Mammary epithelial cell (primary cell): ENCODE measurements at regions of chr5 and their contacts with region 1.

Region 1: DNA sequence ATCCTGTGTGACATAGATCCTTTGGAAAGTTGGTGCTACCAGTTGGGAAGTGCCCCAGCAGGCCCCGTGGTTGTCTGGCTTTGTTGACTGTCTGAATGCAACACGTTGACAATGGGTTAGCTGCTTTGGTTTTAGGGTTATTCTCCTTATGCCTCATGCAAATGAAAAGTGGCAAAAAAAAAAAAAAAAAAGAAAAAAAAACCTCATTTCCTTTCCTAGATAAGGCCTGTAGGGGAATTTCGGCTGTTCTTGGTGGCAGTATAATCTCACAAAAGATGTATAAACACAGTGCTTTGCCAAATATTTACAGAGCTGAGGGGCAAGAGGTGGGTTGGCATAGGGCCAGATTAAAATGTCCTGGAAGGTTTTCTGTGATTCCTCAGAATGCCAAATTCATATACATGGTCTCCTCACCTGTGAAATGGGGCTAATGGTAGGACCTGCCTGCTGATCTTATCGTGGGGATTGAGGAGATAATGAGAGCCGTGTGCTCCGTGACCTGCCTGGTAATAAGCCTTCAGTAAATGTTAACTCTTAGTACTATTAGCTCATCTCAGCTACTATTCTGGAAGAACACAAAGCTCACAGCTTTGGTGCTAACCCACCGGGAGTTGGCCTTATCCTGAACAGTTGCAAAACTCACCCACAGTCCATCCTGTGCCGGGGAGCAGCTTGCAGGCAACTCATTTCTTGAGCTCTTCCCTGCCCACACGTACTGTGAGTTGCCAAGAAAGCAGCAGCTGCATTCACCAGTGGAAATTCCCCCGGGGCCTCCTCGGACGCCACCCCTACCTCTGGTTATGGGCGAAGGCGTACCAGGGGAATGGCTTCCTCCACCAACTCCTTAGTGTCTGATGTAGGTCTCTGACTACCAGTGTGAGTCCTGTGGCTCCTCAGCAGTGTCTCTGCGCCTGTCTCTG is 220.3 kb downstream of the NR3C1 start:
- DNase-seq: no peak
- H3K4me3 ChIP-seq: no peak overlapping the region
- H3K27ac ChIP-seq: peak overlapping the region; percentile 4
- H3K4me1 ChIP-seq: peaks cover 35% of the 10 kb centered on the region
- H3K27me3 ChIP-seq: no peaks in the 10 kb centered on the region
- CTCF ChIP-seq: no peak

Region 2: DNA sequence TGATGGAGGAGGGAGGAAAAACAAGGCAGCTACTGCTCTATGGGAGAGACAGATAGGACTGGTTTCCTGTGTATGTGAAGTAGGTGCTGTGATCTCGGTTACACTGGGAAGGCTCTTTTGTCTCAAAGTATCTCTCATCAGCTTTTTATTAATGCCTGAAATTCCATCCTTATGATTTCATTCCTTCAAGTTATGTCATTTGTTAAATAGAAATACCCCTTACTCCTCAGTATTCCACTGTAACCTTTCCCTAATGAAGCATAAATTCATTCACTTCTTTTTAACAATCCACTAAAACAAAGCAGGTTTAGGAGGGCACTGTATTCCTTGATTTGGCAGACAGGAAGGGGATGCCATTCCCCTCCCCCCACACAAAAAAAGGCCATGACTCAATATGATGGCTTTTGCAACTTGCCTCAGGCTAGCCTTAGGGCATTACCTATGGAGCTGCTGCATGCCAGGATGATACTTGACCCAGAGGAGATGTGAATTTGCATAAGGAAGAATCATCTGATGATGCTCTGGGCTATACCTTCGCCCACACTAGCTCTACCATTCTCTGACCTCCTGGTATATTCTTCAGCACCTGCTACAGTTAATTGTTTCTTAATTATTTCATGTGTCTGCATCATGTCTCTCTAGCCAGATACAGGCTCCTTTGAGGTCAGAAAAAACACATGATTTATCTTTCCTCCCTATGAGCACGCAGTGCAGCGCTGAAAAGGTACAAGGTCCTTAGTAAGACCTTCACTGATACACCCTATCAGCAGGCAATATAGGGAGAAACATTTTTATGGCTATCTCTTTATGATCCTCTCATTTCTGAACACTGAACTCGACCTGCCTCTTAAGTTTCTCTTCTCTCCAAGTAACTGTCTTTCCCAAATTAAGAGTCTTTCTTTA is 194.0 kb after region 1 on chr5:
- CTCF ChIA-PET with region 1: no interaction called
- dilution Hi-C with region 1: no loop called
- in situ Hi-C with region 1: loop called in 1 of 2 experiments (anchors 25 kb)
- intact Hi-C with region 1: no loop called
- DNase-seq: peak; percentile 77
- H3K4me3 ChIP-seq: no peak overlapping the region
- H3K27ac ChIP-seq: peak overlapping the region; percentile 52
- H3K4me1 ChIP-seq: peaks cover 27% of the 10 kb centered on the region
- H3K27me3 ChIP-seq: no peaks in the 10 kb centered on the region
- CTCF ChIP-seq: no peak

Region 3: DNA sequence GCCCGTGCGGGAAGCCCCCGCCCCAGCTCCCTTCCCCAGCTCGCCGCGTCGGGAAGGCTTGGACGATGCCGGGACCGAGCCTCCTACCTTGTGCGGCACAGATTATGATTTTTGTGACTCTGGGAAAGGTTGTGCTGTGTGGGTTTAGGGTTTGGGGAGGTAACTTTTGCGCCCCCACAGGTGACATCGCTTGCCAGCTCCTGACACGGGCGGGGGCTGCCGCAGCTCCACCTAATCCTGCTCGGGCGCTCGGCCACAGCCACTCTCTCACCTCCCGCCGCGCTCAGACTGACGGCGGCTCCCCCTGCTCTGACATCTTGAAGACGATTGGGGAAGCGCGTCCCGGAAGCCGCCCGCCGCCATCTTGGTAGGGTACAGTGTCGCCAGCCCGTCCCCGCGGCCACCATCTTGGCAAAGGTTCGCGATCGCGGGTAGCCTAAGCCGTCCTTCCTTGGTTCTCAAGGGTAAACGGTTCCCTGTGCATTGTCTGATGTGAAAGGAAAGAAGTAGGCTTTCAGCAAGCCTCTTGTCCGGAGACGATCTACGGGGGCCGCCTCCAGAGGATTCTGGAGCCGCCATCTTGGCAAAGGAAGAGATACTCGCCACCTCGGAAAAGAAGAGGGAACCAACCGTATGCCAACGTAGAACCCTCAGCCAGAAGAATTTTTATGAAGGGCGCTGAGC is 222.0 kb after region 1 on chr5:
- CTCF ChIA-PET with region 1: no interaction called
- dilution Hi-C with region 1: no loop called
- in situ Hi-C with region 1: no loop called
- intact Hi-C with region 1: no loop called
- DNase-seq: peak; percentile 62
- H3K4me3 ChIP-seq: peak overlapping the region; percentile 60 to 94 (median 83)
- H3K27ac ChIP-seq: peak overlapping the region; percentile 86
- H3K4me1 ChIP-seq: peaks cover 11% of the 10 kb centered on the region
- H3K27me3 ChIP-seq: no peaks in the 10 kb centered on the region
- CTCF ChIP-seq: no peak

Region 4: GRCh38 chr5:143968011-143968878 is 785.1 kb after region 1 on chr5:
- CTCF ChIA-PET with region 1: no interaction called
- dilution Hi-C with region 1: no loop called
- in situ Hi-C with region 1: no loop called
- intact Hi-C with region 1: loop called (anchors 10 kb)
- DNase-seq: peak; percentile 70
- H3K4me3 ChIP-seq: no peak overlapping the region
- H3K27ac ChIP-seq: no peak overlapping the region
- H3K4me1 ChIP-seq: peaks cover 7% of the 10 kb centered on the region
- H3K27me3 ChIP-seq: no peaks in the 10 kb centered on the region
- CTCF ChIP-seq: peak; percentile 39 to 59